Adrenal gland (tissue), 19 donors: ENCODE measurements at regions of chr13 and their contacts with region 1.

Region 1: DNA sequence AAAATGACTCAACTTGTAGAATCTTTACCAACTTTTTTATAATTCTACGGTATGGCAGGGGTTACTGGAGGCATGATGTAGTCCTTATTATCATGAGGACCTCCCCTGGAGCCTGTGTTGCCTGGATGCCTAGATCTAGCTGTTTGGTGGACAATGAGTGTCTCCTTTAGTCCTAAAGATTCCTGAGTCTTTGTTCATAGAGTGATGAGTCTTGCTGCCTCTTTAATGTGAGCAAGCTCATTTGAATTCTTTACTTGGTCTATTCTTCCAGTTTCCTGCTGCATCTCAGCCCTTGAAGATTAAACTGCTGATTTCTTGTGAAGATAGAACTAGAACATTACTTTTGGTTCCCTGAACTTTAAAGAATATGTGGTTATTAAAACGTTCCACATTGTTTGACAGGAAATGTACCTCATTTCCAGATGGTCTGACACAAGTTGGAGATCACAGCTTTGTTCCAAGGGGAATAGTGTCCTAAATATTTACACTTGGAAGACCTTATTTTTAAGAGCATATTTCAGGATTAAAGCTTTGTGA is 51.9 kb downstream of the SLAIN1 start:
- DNase-seq: no peak
- H3K4me3 ChIP-seq: no peak overlapping the region
- H3K27ac ChIP-seq: no peak overlapping the region
- H3K4me1 ChIP-seq: no peaks in the 10 kb centered on the region
- H3K27me3 ChIP-seq: no peaks in the 10 kb centered on the region
- CTCF ChIP-seq: no peak
- POLR2A ChIP-seq: no peak

Region 2: DNA sequence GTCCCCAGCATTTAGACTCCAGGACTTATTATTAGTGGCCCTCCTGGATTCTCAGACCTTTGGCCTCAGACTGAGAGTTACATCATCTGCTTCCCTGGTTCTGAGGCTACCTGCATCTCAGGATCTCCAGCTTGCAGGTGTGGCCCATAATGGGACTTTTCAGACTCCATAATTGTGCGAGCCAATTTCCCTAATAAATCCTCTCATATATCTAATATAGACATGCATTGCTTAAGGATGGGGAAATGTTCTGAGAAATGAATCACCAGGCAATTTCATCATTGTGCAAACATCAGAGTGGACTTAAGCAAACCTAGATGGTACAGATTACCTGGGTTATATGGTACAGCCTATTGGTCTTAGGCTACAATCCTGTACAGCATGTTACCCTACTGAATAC is 606.0 kb before region 1 on chr13:
- intact Hi-C with region 1: no loop called
- DNase-seq: no peak
- H3K4me3 ChIP-seq: no peak overlapping the region
- H3K27ac ChIP-seq: no peak overlapping the region
- H3K4me1 ChIP-seq: no peaks in the 10 kb centered on the region
- H3K27me3 ChIP-seq: no peaks in the 10 kb centered on the region
- CTCF ChIP-seq: no peak
- POLR2A ChIP-seq: no peak

Region 3: DNA sequence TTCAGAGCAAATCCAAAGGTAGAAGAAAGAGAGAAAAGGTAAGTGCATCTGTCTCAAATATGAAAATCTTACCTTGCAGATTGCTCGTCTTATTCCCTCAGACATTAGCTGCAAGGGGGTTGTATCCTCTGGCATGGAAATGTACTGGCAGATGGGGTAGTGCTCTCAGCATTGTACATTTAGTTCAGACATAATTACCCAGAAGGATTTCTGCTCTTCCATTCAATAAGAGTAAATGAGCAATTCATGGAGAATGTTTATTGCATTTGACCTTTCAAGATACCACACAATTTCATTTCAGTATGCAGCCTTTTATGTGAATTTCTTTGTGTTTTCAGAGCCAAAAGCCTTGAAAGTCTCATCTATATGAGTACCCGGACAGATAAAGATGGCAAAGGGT is 150.1 kb before region 1 on chr13:
- intact Hi-C with region 1: loop called in 1 of 2 experiments (anchors 5 kb)
- DNase-seq: no peak
- H3K4me3 ChIP-seq: no peak overlapping the region
- H3K27ac ChIP-seq: no peak overlapping the region
- H3K4me1 ChIP-seq: no peaks in the 10 kb centered on the region
- H3K27me3 ChIP-seq: no peaks in the 10 kb centered on the region
- CTCF ChIP-seq: no peak
- POLR2A ChIP-seq: no peak

Region 4: GRCh38 chr13:77898097-77898496 is 148.7 kb after region 1 on chr13:
- intact Hi-C with region 1: no loop called
- DNase-seq: peak in 1 of 7 donors; percentile 7
- H3K4me3 ChIP-seq: no peak overlapping the region
- H3K27ac ChIP-seq: peak overlapping the region; percentile 21 to 87 (median 54)
- H3K4me1 ChIP-seq: peaks cover 0 to 16% of the 10 kb centered on the region in 2 donors
- H3K27me3 ChIP-seq: no peaks in the 10 kb centered on the region
- CTCF ChIP-seq: no peak
- POLR2A ChIP-seq: no peak

Region 5: GRCh38 chr13:78265098-78265497 is 515.7 kb after region 1 on chr13:
- intact Hi-C with region 1: no loop called
- DNase-seq: no peak
- H3K4me3 ChIP-seq: no peak overlapping the region
- H3K27ac ChIP-seq: no peak overlapping the region
- H3K4me1 ChIP-seq: no peaks in the 10 kb centered on the region
- H3K27me3 ChIP-seq: no peaks in the 10 kb centered on the region
- CTCF ChIP-seq: no peak
- POLR2A ChIP-seq: no peak

Region 6: DNA sequence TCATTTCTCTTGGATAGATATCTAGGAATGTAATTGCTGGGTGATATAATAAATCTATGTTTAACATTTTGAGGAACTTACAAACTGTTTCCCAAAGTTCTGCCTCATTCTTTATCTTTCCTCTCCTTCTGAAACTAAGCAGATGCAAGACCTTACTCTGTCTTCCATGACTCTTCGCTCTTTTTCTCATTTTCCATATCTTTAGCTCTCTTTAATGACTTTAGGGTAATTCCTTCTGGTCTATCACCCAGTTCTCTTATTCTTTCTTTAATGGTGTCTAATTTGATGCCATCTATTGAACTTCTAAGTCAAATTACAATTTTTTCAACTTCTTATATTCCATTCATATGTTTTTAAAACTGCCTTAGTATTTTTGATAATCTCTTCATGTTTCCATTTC is 537.3 kb after region 1 on chr13:
- intact Hi-C with region 1: no loop called
- DNase-seq: no peak
- H3K4me3 ChIP-seq: no peak overlapping the region
- H3K27ac ChIP-seq: no peak overlapping the region
- H3K4me1 ChIP-seq: no peaks in the 10 kb centered on the region
- H3K27me3 ChIP-seq: no peaks in the 10 kb centered on the region
- CTCF ChIP-seq: no peak
- POLR2A ChIP-seq: no peak